ENCODE measurements at regions of chr20 and their contacts with region 1.

Region 1: GRCh38 chr20:13784893-13785715 is at the starts of genes ESF1 and NDUFAF5:
- DNase-seq: peak; percentile 82 to 96 (median 91)
- ATAC-seq: peak; percentile 96
- H3K4me3 ChIP-seq: peak within 1 kb of the TSS; percentile 74 to 84
- H3K4me3 Mint-ChIP-seq: peak within 1 kb of the TSS; percentile 98
- H3K27ac ChIP-seq: peak within 1 kb of the TSS; percentile 77 to 87
- H3K27ac Mint-ChIP-seq: peak within 1 kb of the TSS; percentile 98
- H3K4me1 ChIP-seq: peaks cover 23% of the 10 kb centered on the region
- H3K4me1 Mint-ChIP-seq: peaks cover 60% of the 10 kb centered on the region
- H3K27me3 ChIP-seq: no peaks in the 10 kb centered on the region
- H3K27me3 Mint-ChIP-seq: no peaks in the 10 kb centered on the region
- CTCF ChIP-seq: no peak
- total RNA-seq, gene ESF1: 7.9 to 8.8 TPM
- total RNA-seq, gene NDUFAF5: 78.6 to 92.1 TPM

Region 2: DNA sequence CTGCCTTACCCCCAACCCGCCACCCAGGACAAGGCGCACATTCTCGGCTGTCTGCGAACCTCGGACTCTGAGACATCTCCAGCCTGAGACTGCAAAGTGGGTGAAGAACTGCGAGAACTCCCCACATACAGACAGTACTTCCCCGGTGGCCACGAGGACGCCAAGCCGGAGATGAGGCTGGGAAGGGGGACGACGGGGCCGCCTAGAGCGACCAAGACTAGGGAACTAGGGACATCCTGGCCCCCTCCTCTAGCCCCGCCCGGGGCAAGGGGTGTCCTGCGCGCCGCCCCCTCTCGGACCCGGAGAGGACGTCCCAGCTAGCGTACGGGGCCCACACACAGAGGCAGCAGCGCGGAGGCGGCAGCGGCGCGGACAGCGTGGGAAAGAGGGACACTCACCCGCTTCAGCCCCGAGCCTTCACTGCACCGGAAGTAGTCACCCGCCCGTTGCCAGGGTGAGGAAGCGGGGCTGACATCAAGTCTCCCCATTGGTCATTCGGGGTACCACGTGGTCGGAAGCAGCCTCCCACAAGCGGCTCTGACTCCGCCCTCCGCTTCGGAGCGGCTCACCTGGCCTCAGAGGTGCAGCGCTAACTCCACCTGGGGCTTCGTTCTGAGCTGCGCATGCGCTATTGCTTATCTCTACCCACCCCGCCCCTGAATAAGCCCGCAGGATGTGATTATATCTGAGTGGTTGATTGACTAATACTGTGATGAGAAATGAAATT is 146.4 kb before region 1 on chr20 and contains the start of gene TASP1:
- CTCF ChIA-PET with region 1: no interaction called
- POLR2A ChIA-PET with region 1: no interaction called
- intact Hi-C with region 1: loop called (anchors 1 to 5 kb)
- DNase-seq: peak; percentile 93 to 98 (median 97)
- ATAC-seq: peak; percentile 99
- H3K4me3 ChIP-seq: peak within 1 kb of the TSS; percentile 75 to 85
- H3K4me3 Mint-ChIP-seq: peak within 1 kb of the TSS; percentile 90
- H3K27ac ChIP-seq: peak within 1 kb of the TSS; percentile 74 to 80
- H3K27ac Mint-ChIP-seq: peak within 1 kb of the TSS; percentile 66
- H3K4me1 ChIP-seq: peaks cover 4% of the 10 kb centered on the region
- H3K4me1 Mint-ChIP-seq: peaks cover 24% of the 10 kb centered on the region
- H3K27me3 ChIP-seq: no peaks in the 10 kb centered on the region
- H3K27me3 Mint-ChIP-seq: peaks cover 7% of the 10 kb centered on the region
- CTCF ChIP-seq: no peak
- total RNA-seq, gene TASP1: 10.7 to 11.5 TPM

Region 3: GRCh38 chr20:13644010-13644409 is 141.1 kb before region 1 on chr20:
- CTCF ChIA-PET with region 1: no interaction called
- POLR2A ChIA-PET with region 1: no interaction called
- intact Hi-C with region 1: loop called in 1 of 2 experiments (anchors 5 kb)
- DNase-seq: no peak
- ATAC-seq: no peak
- H3K4me3 ChIP-seq: no peak overlapping the region
- H3K4me3 Mint-ChIP-seq: no peak overlapping the region
- H3K27ac ChIP-seq: no peak overlapping the region
- H3K27ac Mint-ChIP-seq: no peak overlapping the region
- H3K4me1 ChIP-seq: no peaks in the 10 kb centered on the region
- H3K4me1 Mint-ChIP-seq: peaks cover 3% of the 10 kb centered on the region
- H3K27me3 ChIP-seq: no peaks in the 10 kb centered on the region
- H3K27me3 Mint-ChIP-seq: peaks cover 26% of the 10 kb centered on the region
- CTCF ChIP-seq: no peak